ENCODE measurements at regions of chr13 and their contacts with region 1.

Region 1: GRCh38 chr13:28138012-28138755 is at the start of gene PAN3:
- DNase-seq: peak; percentile 92
- H3K4me3 Mint-ChIP-seq: peak within 1 kb of the TSS; percentile 77
- H3K27ac Mint-ChIP-seq: peak within 1 kb of the TSS; percentile 96
- H3K4me1 Mint-ChIP-seq: peaks cover 37% of the 10 kb centered on the region
- H3K27me3 Mint-ChIP-seq: no peaks in the 10 kb centered on the region
- total RNA-seq, gene PAN3: 21.2 to 21.7 TPM

Region 2: DNA sequence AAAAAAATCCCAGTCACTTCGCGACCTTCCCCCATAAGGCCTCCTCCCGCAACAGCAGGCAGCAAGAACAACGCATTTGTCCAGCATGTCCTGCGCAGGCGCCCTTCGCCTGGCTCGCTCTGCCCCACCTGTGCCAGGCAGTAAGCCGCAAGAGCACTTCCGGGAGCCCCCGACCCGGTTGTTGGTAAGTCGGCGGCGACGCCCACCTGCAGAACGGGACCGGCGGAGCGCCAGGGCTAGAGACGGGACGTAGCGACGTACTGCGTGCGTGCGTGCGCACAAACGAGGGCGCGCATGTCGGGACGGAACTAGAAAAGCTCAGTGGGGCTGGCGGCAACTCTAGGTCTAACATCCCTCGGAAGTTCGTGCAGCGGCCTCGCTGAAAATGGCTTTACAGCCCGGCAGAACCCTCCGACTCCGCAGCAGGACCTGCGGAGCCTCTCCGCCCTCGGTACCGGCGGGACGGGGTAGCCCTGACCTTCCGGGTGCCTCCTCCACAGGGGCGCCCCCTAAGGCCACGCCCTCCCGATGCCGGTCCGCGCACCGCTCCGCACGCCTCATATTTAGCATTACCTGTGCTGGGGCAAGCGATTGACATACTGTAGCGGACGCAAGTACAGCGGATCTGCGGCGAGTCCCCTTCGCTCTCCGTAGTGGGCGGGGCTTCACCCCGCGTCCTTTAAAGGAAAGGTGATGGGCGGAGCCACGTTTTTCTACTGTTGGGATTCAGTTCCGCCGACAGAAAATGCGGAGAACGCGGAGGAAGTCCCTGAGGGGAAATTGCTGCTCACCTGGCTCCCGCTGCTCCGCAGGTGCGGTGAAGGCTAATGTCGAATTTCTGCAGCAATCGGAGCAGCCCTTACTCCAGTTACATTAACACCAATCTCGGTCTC is 688.0 kb before region 1 on chr13 and contains the start of gene MTIF3:
- CTCF ChIA-PET with region 1: no interaction called
- intact Hi-C with region 1: loop called (anchors 1 kb)
- DNase-seq: peak; percentile 97
- H3K4me3 Mint-ChIP-seq: peak within 1 kb of the TSS; percentile 94
- H3K27ac Mint-ChIP-seq: peak within 1 kb of the TSS; percentile 99
- H3K4me1 Mint-ChIP-seq: peaks cover 55% of the 10 kb centered on the region
- H3K27me3 Mint-ChIP-seq: no peaks in the 10 kb centered on the region
- total RNA-seq, gene MTIF3: 34.0 to 42.1 TPM

Region 3: GRCh38 chr13:27919934-27920676 is 218.1 kb before region 1 on chr13 and contains the start of gene PDX1:
- CTCF ChIA-PET with region 1: no interaction called
- intact Hi-C with region 1: no loop called
- DNase-seq: no peak
- H3K4me3 Mint-ChIP-seq: peak within 1 kb of the TSS; percentile 68
- H3K27ac Mint-ChIP-seq: no peak within 1 kb of the TSS
- H3K4me1 Mint-ChIP-seq: peaks cover 39% of the 10 kb centered on the region
- H3K27me3 Mint-ChIP-seq: peaks cover 77% of the 10 kb centered on the region
- total RNA-seq, gene PDX1: not detected

Region 4: GRCh38 chr13:28058866-28059624 is 79.1 kb before region 1 on chr13:
- CTCF ChIA-PET with region 1: interaction called, 3 read pairs
- intact Hi-C with region 1: loop called (anchors 1 kb)
- DNase-seq: peak; percentile 72
- H3K4me3 Mint-ChIP-seq: no peak overlapping the region
- H3K27ac Mint-ChIP-seq: no peak overlapping the region
- H3K4me1 Mint-ChIP-seq: no peaks in the 10 kb centered on the region
- H3K27me3 Mint-ChIP-seq: peaks cover 3% of the 10 kb centered on the region

Region 5: DNA sequence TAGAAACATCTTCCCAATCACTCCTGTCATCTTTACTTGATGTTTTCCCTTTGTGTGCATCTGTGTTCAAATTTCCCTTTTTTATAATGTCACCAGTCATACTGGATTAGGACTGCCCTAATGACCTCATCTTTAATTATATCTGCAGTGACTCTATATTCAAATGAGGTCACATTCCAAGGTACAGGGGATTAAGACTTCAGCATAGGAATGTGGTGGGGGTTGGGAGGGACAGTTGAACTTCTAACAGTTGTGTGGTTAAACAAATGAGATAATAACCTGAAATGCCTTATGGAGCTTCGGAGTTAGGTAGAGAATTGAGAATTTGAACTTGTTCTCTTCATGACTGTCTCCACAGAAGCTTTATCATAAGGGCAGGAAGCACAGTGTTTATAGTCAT is 23.2 kb after region 1 on chr13:
- CTCF ChIA-PET with region 1: no interaction called
- intact Hi-C with region 1: no loop called
- DNase-seq: no peak
- H3K4me3 Mint-ChIP-seq: no peak overlapping the region
- H3K27ac Mint-ChIP-seq: no peak overlapping the region
- H3K4me1 Mint-ChIP-seq: peaks cover 43% of the 10 kb centered on the region
- H3K27me3 Mint-ChIP-seq: no peaks in the 10 kb centered on the region

Region 6: GRCh38 chr13:28204690-28205443 is 66.7 kb after region 1 on chr13:
- CTCF ChIA-PET with region 1: interaction called, 3 read pairs
- intact Hi-C with region 1: loop called (anchors 1 kb)
- DNase-seq: peak; percentile 75
- H3K4me3 Mint-ChIP-seq: no peak overlapping the region
- H3K27ac Mint-ChIP-seq: no peak overlapping the region
- H3K4me1 Mint-ChIP-seq: peaks cover 38% of the 10 kb centered on the region
- H3K27me3 Mint-ChIP-seq: no peaks in the 10 kb centered on the region

Region 7: GRCh38 chr13:28220166-28220565 is 82.0 kb after region 1 on chr13:
- CTCF ChIA-PET with region 1: no interaction called
- intact Hi-C with region 1: no loop called
- DNase-seq: no peak
- H3K4me3 Mint-ChIP-seq: no peak overlapping the region
- H3K27ac Mint-ChIP-seq: no peak overlapping the region
- H3K4me1 Mint-ChIP-seq: peaks cover 16% of the 10 kb centered on the region
- H3K27me3 Mint-ChIP-seq: no peaks in the 10 kb centered on the region

Region 8: GRCh38 chr13:28494776-28495537 is 356.8 kb after region 1 on chr13 and contains the start of gene FLT1:
- CTCF ChIA-PET with region 1: no interaction called
- intact Hi-C with region 1: loop called (anchors 1 kb)
- DNase-seq: peak; percentile 61
- H3K4me3 Mint-ChIP-seq: peak within 1 kb of the TSS; percentile 77
- H3K27ac Mint-ChIP-seq: peak within 1 kb of the TSS; percentile 77
- H3K4me1 Mint-ChIP-seq: peaks cover 23% of the 10 kb centered on the region
- H3K27me3 Mint-ChIP-seq: peaks cover 31% of the 10 kb centered on the region
- total RNA-seq, gene FLT1: 21.8 to 21.9 TPM

Region 9: DNA sequence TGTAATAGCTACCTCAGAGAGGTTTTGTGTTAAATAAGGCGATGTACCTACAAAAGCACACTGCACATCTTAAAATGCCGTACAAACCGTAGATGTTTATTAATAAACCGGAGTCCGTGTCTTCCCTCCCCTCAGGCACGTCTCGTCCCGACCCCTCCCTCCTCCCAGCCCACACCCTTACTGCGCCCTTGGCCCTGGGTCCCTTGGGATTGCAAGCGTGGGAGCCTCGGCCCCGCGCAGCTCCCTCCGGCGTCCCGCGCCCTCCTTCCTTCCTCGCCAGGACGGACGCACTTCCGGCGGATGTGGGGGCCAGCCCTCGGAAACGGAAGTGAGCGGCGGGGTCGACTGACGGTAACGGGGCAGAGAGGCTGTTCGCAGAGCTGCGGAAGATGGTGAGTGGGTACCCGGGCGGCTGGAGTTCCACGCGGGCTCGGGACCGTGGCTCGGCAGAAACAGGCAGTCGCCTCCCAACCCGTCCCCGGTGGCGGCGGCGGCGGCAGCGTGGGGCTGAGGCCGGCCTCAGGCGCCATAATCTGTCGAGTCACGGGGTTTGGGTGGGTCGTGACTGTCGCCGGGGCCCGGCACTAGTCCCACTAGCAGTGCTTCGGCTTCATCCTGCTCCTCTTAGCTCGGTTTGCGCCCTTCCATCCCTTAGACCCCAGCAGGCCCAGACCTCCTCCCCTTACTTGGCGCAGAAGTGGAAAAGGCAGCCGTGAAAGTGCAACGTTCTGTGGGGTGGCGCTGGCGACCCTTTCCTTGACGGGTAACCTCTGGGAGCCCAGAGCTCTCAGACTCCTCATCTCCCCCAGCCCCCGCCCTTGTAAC is 520.8 kb after region 1 on chr13 and contains the start of gene POMP:
- CTCF ChIA-PET with region 1: no interaction called
- intact Hi-C with region 1: loop called (anchors 1 kb)
- DNase-seq: peak; percentile 95
- H3K4me3 Mint-ChIP-seq: peak within 1 kb of the TSS; percentile 97
- H3K27ac Mint-ChIP-seq: peak within 1 kb of the TSS; percentile 98
- H3K4me1 Mint-ChIP-seq: peaks cover 56% of the 10 kb centered on the region
- H3K27me3 Mint-ChIP-seq: no peaks in the 10 kb centered on the region
- total RNA-seq, gene POMP: 106 to 108 TPM

Region 10: DNA sequence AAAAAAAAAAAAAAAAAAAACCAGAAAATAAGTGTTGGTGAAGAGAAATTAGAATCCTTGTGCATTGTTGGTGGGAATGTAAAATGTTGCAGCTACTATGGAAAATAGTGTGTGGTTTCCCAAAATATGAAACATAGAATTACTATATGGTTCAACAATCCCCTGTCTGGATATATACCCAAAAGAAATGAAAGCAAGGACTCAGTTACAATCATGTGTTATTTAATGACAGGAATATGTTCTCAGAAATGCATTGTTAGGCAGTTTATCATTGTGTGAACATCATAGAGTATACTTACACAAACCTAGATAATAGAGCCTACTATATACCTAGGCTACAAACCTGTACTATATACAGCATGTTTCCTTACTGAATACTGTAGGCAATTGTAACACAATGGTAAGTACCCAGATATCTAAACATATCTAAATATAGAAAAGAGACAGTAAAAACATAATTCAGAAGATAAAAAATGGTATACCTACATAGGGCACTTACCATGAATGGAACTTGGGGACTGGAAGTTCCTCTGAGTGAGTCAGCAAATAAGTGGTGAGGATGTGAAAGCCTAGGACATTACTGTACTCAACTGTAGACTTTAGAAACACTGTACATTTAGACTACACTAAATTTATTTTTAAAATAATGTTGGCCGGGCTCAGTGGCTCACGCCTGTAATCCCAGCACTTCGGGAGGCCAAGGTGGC is 1483.0 kb after region 1 on chr13:
- CTCF ChIA-PET with region 1: no interaction called
- intact Hi-C with region 1: no loop called
- DNase-seq: no peak
- H3K4me3 Mint-ChIP-seq: no peak overlapping the region
- H3K27ac Mint-ChIP-seq: no peak overlapping the region
- H3K4me1 Mint-ChIP-seq: no peaks in the 10 kb centered on the region
- H3K27me3 Mint-ChIP-seq: peaks cover 25% of the 10 kb centered on the region

Measured in activated naive CD4-positive, alpha-beta T cell treated with anti-CD3 and anti-CD28 coated beads for 36 hours (primary cell).